GM12878 (cell line): ENCODE measurements at regions of chr1 and their contacts with region 1.

Region 1: GRCh38 chr1:153572569-153573015 is 6.9 kb upstream of the S100A2 start:
- DNase-seq: peak; percentile 37
- ATAC-seq: peak; percentile 94
- H3K4me3 ChIP-seq: no peak overlapping the region
- H3K27ac ChIP-seq: no peak overlapping the region
- H3K4me1 ChIP-seq: peaks cover 8% of the 10 kb centered on the region
- H3K27me3 ChIP-seq: no peaks in the 10 kb centered on the region
- CTCF ChIP-seq: peak; percentile 85 to 97 (median 89)
- EP300 ChIP-seq: no peak
- POLR2A ChIP-seq: no peak
- RAD21 ChIP-seq: peak; percentile 92

Region 2: GRCh38 chr1:152495066-152495675 is 1077.4 kb before region 1 on chr1:
- CTCF ChIA-PET with region 1: no interaction called
- POLR2A ChIA-PET with region 1: no interaction called
- RAD21 ChIA-PET with region 1: no interaction called
- SMC1A ChIA-PET with region 1: no interaction called
- in situ Hi-C with region 1: no loop called
- intact Hi-C with region 1: no loop called
- DNase-seq: no peak
- ATAC-seq: peak; percentile 72
- H3K4me3 ChIP-seq: no peak overlapping the region
- H3K27ac ChIP-seq: no peak overlapping the region
- H3K4me1 ChIP-seq: no peaks in the 10 kb centered on the region
- H3K27me3 ChIP-seq: no peaks in the 10 kb centered on the region
- CTCF ChIP-seq: peak; percentile 55 to 90 (median 82)
- EP300 ChIP-seq: no peak
- POLR2A ChIP-seq: no peak
- RAD21 ChIP-seq: peak; percentile 59

Region 3: DNA sequence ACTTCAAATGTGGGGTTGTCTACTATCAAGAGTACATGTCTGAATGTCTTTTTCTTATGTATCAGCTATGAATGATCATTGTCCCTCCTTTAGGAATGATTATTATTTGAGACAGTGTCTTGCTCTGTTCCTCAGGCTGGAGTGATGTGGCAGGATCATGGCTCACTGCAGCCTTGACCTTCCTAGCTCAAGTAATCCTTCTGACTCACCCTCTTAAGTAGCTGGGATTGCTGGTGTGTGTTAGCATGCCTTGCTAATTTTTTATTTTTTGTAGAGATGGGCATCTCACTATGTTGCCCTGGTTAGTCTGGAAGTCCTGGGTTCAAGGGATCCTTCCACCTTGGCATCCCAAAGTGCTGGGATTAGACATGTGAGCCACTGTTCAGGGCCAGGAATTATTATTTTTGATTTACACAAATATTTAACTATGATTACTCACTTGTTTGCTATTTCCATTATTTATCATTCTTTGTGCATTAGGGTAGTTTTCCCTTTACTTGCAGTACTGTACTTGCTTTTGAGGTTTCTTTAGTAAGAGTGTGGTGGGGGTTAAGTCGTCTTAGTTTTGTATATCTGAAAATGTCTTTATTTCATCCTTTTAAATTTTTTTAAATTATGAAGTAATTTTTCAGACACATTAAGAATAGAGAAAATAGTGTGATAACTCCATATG is 125.0 kb before region 1 on chr1:
- CTCF ChIA-PET with region 1: no interaction called
- POLR2A ChIA-PET with region 1: no interaction called
- RAD21 ChIA-PET with region 1: no interaction called
- SMC1A ChIA-PET with region 1: no interaction called
- in situ Hi-C with region 1: no loop called
- intact Hi-C with region 1: no loop called
- DNase-seq: no peak
- ATAC-seq: no peak
- H3K4me3 ChIP-seq: no peak overlapping the region
- H3K27ac ChIP-seq: no peak overlapping the region
- H3K4me1 ChIP-seq: no peaks in the 10 kb centered on the region
- H3K27me3 ChIP-seq: peaks cover 0 to 2% of the 10 kb centered on the region in 2 experiments; a peak in 1 of 4 replicates
- CTCF ChIP-seq: no peak
- EP300 ChIP-seq: no peak
- POLR2A ChIP-seq: no peak
- RAD21 ChIP-seq: no peak

Region 4: GRCh38 chr1:153510984-153511410 is 61.6 kb before region 1 on chr1:
- CTCF ChIA-PET with region 1: interaction called, 191 read pairs
- POLR2A ChIA-PET with region 1: no interaction called
- RAD21 ChIA-PET with region 1: interaction called, 59 read pairs
- SMC1A ChIA-PET with region 1: interaction called, 41 read pairs
- in situ Hi-C with region 1: no loop called
- intact Hi-C with region 1: loop called (anchors 1 kb)
- DNase-seq: no peak
- ATAC-seq: peak; percentile 97
- H3K4me3 ChIP-seq: no peak overlapping the region
- H3K27ac ChIP-seq: no peak overlapping the region
- H3K4me1 ChIP-seq: no peaks in the 10 kb centered on the region
- H3K27me3 ChIP-seq: no peaks in the 10 kb centered on the region
- CTCF ChIP-seq: peak; percentile 85 to 97 (median 91)
- EP300 ChIP-seq: no peak
- POLR2A ChIP-seq: no peak
- RAD21 ChIP-seq: peak; percentile 92

Region 5: DNA sequence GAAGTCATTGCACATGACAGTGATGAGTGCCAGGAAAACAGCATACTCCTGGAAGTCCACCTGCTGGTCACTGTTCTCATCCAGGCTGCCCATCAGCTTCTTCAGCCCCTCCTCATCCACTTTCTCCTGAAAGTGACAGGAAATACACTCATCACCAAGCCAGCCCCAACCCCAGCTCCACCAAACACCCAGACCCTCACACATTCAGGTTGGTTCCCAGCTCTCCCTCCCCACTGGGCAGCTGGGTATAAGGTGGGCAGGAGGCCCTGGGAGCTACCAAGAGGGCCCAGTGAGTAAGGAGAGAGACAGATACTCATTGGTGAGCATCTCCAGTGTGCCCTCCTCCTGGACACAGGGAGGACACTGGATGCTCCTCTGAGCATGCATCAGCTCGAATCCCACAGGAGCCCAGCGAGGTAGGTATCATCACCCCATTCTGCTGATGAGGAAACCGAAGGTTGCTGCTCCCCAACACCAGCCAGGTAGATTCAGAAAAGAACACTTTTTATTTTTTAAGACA is 11.1 kb before region 1 on chr1:
- CTCF ChIA-PET with region 1: interaction called, 13 read pairs
- POLR2A ChIA-PET with region 1: interaction called, 3 read pairs
- RAD21 ChIA-PET with region 1: interaction called, 3 read pairs
- SMC1A ChIA-PET with region 1: interaction called, 3 read pairs
- in situ Hi-C with region 1: no loop called
- intact Hi-C with region 1: no loop called
- DNase-seq: no peak
- ATAC-seq: no peak
- H3K4me3 ChIP-seq: no peak overlapping the region
- H3K27ac ChIP-seq: no peak overlapping the region
- H3K4me1 ChIP-seq: peaks cover 12% of the 10 kb centered on the region
- H3K27me3 ChIP-seq: no peaks in the 10 kb centered on the region
- CTCF ChIP-seq: no peak
- EP300 ChIP-seq: no peak
- POLR2A ChIP-seq: no peak
- RAD21 ChIP-seq: no peak

Region 6: GRCh38 chr1:153626922-153627796 is 54.6 kb after region 1 on chr1 and contains the start of gene S100A13:
- CTCF ChIA-PET with region 1: interaction called, 62 read pairs
- POLR2A ChIA-PET with region 1: interaction called, 3 read pairs
- RAD21 ChIA-PET with region 1: interaction called, 25 read pairs
- SMC1A ChIA-PET with region 1: interaction called, 31 read pairs
- in situ Hi-C with region 1: no loop called
- intact Hi-C with region 1: no loop called
- DNase-seq: no peak
- ATAC-seq: peak; percentile 80
- H3K4me3 ChIP-seq: no peak within 1 kb of the TSS
- H3K27ac ChIP-seq: no peak within 1 kb of the TSS
- H3K4me1 ChIP-seq: peaks cover 14% of the 10 kb centered on the region
- H3K27me3 ChIP-seq: no peaks in the 10 kb centered on the region
- CTCF ChIP-seq: peak; percentile 49 to 66 (median 56)
- EP300 ChIP-seq: no peak
- POLR2A ChIP-seq: peak; percentile 29; the same call in 1 of the 2 replicates
- RAD21 ChIP-seq: peak; percentile 41; the same call in 1 of the 2 replicates
- polyA plus RNA-seq, gene S100A13: 29.7 to 30.9 TPM

Region 7: DNA sequence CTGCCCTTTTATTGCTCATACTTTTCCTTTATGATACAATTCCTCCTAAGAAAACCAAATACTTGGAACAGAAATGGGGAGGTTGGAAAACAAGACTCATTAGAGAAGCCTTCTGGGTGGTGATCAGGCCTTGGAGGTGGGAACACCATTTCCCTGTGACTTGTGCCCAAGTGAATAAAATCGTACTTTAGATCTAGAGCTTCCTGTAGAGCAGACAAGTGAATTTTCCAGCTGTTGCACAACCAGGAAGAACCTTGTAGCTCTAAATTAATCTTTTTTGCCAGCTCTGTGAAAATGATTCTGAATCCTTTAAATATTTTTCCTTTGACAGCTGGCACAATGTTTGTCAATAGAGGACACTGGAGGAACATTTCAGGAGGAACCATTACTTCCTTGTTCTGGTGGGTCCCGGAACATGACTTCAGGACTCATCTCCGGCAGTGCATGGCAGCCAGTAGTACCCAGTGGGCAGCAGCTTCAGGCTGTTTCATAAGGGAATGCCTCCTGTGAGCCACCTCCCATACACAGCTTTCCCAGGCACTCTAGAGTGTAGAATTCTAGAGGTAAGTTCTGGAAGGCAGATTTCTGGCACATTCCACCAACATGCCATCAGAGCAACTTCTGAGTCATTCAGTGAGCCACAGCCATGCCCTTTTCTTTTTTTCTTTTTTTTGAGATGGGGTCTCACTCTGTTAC is 80.4 kb after region 1 on chr1:
- CTCF ChIA-PET with region 1: interaction called, 5 read pairs
- POLR2A ChIA-PET with region 1: no interaction called
- RAD21 ChIA-PET with region 1: interaction called, 4 read pairs
- SMC1A ChIA-PET with region 1: interaction called, 10 read pairs
- in situ Hi-C with region 1: no loop called
- intact Hi-C with region 1: no loop called
- DNase-seq: no peak
- ATAC-seq: no peak
- H3K4me3 ChIP-seq: no peak overlapping the region
- H3K27ac ChIP-seq: no peak overlapping the region
- H3K4me1 ChIP-seq: no peaks in the 10 kb centered on the region; the same call in 1 of the 2 replicates
- H3K27me3 ChIP-seq: no peaks in the 10 kb centered on the region
- CTCF ChIP-seq: no peak
- EP300 ChIP-seq: no peak
- POLR2A ChIP-seq: no peak
- RAD21 ChIP-seq: no peak

Region 8: DNA sequence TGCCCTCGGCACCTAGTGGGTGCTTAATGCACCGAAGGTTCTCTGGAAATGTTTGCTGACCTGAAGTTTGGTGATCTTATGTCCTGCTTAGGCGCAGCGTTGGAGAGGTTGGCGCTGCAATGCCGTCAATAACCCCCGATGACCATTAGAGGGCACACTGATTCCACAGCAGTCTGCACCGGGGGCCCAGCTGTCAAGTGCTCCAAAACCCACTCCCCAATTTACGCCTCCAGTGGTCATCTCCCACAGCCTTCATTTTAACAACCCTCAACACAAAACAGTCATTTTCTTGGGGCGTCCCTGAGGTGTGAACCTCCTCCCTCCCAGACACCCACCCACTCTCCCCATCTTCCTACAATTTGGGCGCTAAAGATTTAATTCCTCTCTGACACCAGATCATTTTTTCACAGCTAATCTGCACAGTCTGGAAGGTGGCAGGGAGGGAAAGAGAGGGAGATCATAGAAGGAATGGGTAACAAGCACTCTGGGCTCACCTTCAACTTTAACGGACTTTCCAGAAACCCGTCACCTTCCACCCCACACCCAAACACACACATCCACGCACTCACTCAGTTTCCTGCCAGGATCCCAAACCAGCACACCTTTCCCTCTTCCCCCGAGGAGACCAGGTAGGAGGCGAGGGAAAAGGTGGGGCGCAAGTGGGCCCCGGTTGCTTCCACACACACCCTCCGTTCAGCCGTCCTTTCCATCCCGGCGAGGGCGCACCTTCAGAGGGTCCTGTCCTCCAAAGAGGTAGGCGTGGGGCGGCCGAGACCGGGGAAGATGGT is 105.3 kb after region 1 on chr1:
- CTCF ChIA-PET with region 1: interaction called, 43 read pairs
- POLR2A ChIA-PET with region 1: interaction called, 4 read pairs
- RAD21 ChIA-PET with region 1: interaction called, 5 read pairs
- SMC1A ChIA-PET with region 1: interaction called, 3 read pairs
- in situ Hi-C with region 1: no loop called
- intact Hi-C with region 1: loop called (anchors 5 kb)
- DNase-seq: no peak
- ATAC-seq: peak; percentile 75
- H3K4me3 ChIP-seq: peak overlapping the region; percentile 47; the same call in 1 of the 2 replicates
- H3K27ac ChIP-seq: no peak overlapping the region
- H3K4me1 ChIP-seq: peaks cover 16% of the 10 kb centered on the region
- H3K27me3 ChIP-seq: peaks cover 14 to 23% of the 10 kb centered on the region in 2 experiments
- CTCF ChIP-seq: peak; percentile 94 to 95 (median 95)
- EP300 ChIP-seq: no peak
- POLR2A ChIP-seq: no peak
- RAD21 ChIP-seq: peak; percentile 90

Region 9: DNA sequence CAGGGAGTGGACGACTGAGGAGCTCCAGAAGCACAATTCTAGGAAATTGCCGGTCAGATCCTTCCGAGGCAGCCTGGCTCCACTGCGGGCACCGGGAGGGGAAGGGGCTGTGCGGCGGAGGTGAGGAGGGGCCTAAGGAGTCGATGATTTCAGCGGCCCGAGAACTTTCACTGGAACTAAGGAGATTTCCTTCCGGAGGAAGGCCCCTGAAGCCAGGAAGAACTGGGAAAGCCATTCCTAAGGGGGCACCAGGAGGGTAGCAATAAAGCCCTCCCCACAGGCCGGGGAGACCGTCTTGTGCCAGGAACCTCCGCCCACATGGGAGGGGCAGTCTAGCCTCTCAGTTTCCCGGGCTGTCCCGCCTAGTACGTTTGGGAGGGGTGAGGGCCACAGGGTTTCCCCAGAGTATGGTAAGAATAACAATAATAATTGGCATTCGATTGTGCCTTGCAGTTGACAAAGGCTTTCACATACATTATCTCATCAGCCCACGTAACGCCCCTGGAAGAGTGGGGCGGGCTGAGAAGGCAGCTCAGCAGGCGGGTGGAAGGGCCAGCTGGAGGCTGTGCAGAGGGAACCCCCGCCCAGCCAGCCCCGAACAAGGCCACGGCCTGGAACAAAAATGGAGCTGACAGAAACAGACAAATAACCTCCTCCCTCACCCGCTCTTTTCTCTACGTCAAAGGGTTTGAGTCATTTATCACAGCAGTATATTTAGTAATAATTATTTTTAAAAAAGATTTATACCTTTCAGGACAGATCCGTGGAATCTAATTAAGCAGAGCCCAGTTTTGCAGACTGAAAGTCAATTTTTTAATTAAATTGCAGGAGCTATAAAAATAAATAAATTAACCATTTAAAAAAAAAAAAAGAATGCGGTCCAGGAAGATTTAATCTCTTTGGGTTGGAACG is 125.7 kb after region 1 on chr1:
- CTCF ChIA-PET with region 1: no interaction called
- POLR2A ChIA-PET with region 1: no interaction called
- RAD21 ChIA-PET with region 1: no interaction called
- SMC1A ChIA-PET with region 1: no interaction called
- in situ Hi-C with region 1: no loop called
- intact Hi-C with region 1: no loop called
- DNase-seq: no peak
- ATAC-seq: peak; percentile 31; the same call in 2 of the 3 replicates
- H3K4me3 ChIP-seq: no peak overlapping the region
- H3K27ac ChIP-seq: no peak overlapping the region
- H3K4me1 ChIP-seq: peaks cover 4% of the 10 kb centered on the region
- H3K27me3 ChIP-seq: no peaks in the 10 kb centered on the region
- CTCF ChIP-seq: no peak
- EP300 ChIP-seq: no peak
- POLR2A ChIP-seq: no peak
- RAD21 ChIP-seq: no peak

Region 10: DNA sequence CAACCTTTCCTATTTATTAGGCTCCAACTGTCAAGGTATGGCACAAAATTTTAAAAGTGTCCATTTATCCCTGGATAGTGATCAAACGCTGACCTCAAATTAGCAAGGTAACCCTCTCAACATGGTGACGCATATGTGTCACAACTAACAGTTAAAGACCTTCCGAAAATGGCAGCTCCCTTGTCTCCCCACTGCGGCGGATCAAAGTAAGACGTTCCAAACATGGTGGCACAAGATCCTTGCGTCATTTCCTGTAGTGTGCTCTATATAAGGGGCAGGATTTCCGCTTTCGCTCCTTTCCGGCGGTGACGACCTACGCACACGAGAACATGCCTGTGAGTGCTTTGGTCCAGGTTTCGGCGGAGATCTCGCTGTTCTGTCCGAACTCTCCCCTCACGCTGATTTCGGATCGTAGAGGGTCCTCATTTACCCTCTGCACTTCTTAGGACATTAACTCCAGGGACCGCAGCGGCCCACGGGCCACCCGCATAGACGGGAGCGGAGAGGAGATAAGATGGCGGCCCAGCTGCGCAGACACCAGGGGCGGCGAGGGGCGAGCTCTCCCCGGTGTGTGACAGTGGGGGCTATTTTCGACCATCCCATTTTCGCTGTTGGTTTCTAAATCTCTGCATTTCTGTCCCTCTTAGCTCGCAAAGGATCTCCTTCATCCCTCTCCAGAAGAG is 418.0 kb after region 1 on chr1 and contains the start of gene RPS27:
- CTCF ChIA-PET with region 1: interaction called, 12 read pairs
- POLR2A ChIA-PET with region 1: interaction called, 5 read pairs
- RAD21 ChIA-PET with region 1: interaction called, 12 read pairs
- SMC1A ChIA-PET with region 1: no interaction called
- in situ Hi-C with region 1: no loop called
- intact Hi-C with region 1: no loop called
- DNase-seq: peak; percentile 97
- ATAC-seq: peak; percentile 82
- H3K4me3 ChIP-seq: peak within 1 kb of the TSS; percentile 86
- H3K27ac ChIP-seq: peak within 1 kb of the TSS; percentile 96
- H3K4me1 ChIP-seq: peaks cover 9% of the 10 kb centered on the region
- H3K27me3 ChIP-seq: no peaks in the 10 kb centered on the region
- CTCF ChIP-seq: no peak
- EP300 ChIP-seq: no peak
- POLR2A ChIP-seq: peak; percentile 100
- RAD21 ChIP-seq: no peak
- polyA plus RNA-seq, gene RPS27: 9,903 to 14,234 TPM